ENCODE measurements at regions of chr6 and their contacts with region 1.

Region 1: DNA sequence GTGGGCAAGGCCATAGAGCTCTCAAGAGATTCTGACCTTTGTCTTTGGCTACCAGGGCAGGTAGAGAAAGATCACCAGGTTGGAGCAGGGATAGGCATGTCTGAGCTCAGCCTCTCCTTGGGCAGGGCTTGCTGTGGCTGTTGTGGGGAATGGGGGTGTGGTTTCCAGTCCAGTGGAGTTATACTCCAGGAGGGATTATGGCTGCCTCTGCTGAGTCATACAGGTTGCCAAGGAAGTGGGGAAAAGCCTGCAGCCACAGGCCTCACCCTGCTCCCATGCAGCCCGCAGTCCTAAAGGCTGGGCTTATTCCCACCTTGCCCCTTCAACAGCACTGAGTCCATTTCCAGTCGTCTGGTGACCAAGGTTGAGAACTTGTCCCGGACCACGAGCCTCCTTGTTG is 21.9 kb downstream of the MEP1A start:
- DNase-seq: no peak
- ATAC-seq: no peak
- H3K4me3 ChIP-seq: no peak overlapping the region
- H3K27ac ChIP-seq: no peak overlapping the region
- H3K4me1 ChIP-seq: no peaks in the 10 kb centered on the region
- H3K27me3 ChIP-seq: no peaks in the 10 kb centered on the region
- CTCF ChIP-seq: no peak
- EP300 ChIP-seq: no peak
- POLR2A ChIP-seq: no peak
- RAD21 ChIP-seq: no peak

Region 2: GRCh38 chr6:46456297-46456696 is 358.8 kb before region 1 on chr6:
- CTCF ChIA-PET with region 1: no interaction called
- POLR2A ChIA-PET with region 1: no interaction called
- in situ Hi-C with region 1: no loop called
- intact Hi-C with region 1: loop called (anchors 5 kb)
- DNase-seq: no peak
- ATAC-seq: no peak
- H3K4me3 ChIP-seq: no peak overlapping the region
- H3K27ac ChIP-seq: no peak overlapping the region
- H3K4me1 ChIP-seq: no peaks in the 10 kb centered on the region
- H3K27me3 ChIP-seq: no peaks in the 10 kb centered on the region
- CTCF ChIP-seq: no peak
- EP300 ChIP-seq: no peak
- POLR2A ChIP-seq: no peak
- RAD21 ChIP-seq: no peak

Region 3: GRCh38 chr6:46796848-46797580 is 18.1 kb before region 1 on chr6:
- CTCF ChIA-PET with region 1: no interaction called
- POLR2A ChIA-PET with region 1: no interaction called
- in situ Hi-C with region 1: no loop called
- intact Hi-C with region 1: no loop called
- DNase-seq: no peak
- ATAC-seq: no peak
- H3K4me3 ChIP-seq: no peak overlapping the region
- H3K27ac ChIP-seq: no peak overlapping the region
- H3K4me1 ChIP-seq: peaks cover 8% of the 10 kb centered on the region
- H3K27me3 ChIP-seq: no peaks in the 10 kb centered on the region
- CTCF ChIP-seq: no peak
- EP300 ChIP-seq: no peak
- POLR2A ChIP-seq: no peak
- RAD21 ChIP-seq: no peak